ENCODE measurements at regions of chr11 and their contacts with region 1.

Region 1: GRCh38 chr11:64358907-64359711 is at the start of gene RPS6KA4:
- DNase-seq: no peak
- H3K4me3 ChIP-seq: peak within 1 kb of the TSS; percentile 94
- CTCF ChIP-seq: no peak

Region 2: DNA sequence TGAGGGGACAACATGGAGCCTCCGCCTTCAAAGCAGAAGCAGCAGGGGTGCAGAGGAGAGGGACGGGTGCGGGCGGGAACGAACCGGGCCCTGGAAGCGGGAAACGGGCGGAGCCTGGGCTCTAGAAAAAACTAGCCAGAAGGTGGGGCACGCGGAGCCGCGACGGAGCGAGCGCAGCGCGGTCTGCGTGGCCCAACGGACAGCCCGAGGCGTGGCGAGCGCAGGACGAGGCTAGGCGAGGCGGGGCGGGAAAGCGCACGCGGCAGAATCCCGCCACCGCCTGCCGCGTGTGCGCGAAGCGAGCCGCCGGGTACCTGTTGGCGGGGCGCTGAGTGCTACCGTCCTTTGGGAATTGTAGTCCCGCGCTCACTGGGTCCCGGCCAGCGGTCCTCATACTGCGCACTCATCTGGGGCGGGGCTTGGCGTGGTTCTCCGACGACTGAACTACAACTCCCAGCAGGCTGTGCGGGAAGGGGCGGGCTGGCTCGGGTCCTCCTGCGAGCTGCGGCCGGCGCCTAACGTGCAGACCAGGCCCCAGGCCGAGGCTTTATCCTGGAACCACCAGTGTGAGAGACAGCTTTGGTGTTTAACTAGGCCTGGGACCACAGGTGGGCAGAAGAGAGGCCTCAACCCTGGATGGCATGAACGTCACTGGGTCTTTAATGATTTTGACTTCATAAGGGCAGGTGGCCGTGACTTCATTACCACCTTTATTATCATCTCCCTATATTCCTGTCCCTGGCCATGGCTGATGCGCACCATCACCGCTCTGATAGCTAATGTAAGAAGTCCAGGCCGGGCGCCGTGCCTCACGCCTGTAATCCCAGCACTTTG is 687.6 kb before region 1 on chr11 and contains the start of gene ATL3:
- CTCF ChIA-PET with region 1: no interaction called
- POLR2A ChIA-PET with region 1: no interaction called
- DNase-seq: peak; percentile 53
- H3K4me3 ChIP-seq: peak within 1 kb of the TSS; percentile 79
- CTCF ChIP-seq: peak; percentile 10

Region 3: DNA sequence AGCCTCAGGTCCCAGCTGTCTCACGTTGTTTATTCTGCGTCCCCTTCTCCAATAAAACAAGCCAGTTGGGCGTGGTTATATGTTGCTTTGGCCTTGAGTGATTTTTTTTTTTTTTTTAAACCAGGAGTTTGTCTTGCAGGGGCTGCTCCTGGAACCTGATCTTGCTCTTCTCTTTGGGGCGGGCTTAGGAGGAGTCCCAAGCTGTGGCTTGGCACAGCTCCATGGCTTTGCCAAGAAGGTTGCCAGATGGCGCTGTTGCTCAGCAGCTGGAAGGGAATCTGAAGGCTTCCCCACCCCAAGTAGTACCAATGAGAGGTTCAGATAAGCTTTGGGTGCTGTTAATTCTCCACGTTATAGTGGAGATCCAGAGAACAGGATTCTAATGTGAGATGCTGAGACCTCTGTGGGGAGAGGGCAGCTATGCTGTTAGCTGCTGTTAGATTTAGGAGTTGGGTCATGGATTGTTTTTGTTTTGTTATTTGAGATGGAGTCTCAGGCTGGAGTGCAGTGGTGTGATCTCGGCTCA is 154.6 kb before region 1 on chr11:
- CTCF ChIA-PET with region 1: interaction called, 47 read pairs
- POLR2A ChIA-PET with region 1: no interaction called
- DNase-seq: peak; percentile 74
- H3K4me3 ChIP-seq: no peak overlapping the region
- CTCF ChIP-seq: peak; percentile 83

Region 4: GRCh38 chr11:64269380-64270234 is 89.5 kb before region 1 on chr11:
- CTCF ChIA-PET with region 1: interaction called, 17 read pairs
- POLR2A ChIA-PET with region 1: interaction called, 8 read pairs
- DNase-seq: peak; percentile 99
- H3K4me3 ChIP-seq: peak overlapping the region; percentile 69
- CTCF ChIP-seq: no peak

Region 5: GRCh38 chr11:64284048-64284961 is 74.8 kb before region 1 on chr11 and contains the start of gene BAD:
- CTCF ChIA-PET with region 1: interaction called, 26 read pairs
- POLR2A ChIA-PET with region 1: no interaction called
- DNase-seq: no peak
- H3K4me3 ChIP-seq: peak within 1 kb of the TSS; percentile 73
- CTCF ChIP-seq: no peak

Region 6: GRCh38 chr11:64317957-64318693 is 41.0 kb before region 1 on chr11 and contains the start of gene PRDX5:
- CTCF ChIA-PET with region 1: interaction called, 48 read pairs
- POLR2A ChIA-PET with region 1: interaction called, 7 read pairs
- DNase-seq: peak; percentile 59
- H3K4me3 ChIP-seq: peak within 1 kb of the TSS; percentile 96
- CTCF ChIP-seq: peak; percentile 50

Region 7: DNA sequence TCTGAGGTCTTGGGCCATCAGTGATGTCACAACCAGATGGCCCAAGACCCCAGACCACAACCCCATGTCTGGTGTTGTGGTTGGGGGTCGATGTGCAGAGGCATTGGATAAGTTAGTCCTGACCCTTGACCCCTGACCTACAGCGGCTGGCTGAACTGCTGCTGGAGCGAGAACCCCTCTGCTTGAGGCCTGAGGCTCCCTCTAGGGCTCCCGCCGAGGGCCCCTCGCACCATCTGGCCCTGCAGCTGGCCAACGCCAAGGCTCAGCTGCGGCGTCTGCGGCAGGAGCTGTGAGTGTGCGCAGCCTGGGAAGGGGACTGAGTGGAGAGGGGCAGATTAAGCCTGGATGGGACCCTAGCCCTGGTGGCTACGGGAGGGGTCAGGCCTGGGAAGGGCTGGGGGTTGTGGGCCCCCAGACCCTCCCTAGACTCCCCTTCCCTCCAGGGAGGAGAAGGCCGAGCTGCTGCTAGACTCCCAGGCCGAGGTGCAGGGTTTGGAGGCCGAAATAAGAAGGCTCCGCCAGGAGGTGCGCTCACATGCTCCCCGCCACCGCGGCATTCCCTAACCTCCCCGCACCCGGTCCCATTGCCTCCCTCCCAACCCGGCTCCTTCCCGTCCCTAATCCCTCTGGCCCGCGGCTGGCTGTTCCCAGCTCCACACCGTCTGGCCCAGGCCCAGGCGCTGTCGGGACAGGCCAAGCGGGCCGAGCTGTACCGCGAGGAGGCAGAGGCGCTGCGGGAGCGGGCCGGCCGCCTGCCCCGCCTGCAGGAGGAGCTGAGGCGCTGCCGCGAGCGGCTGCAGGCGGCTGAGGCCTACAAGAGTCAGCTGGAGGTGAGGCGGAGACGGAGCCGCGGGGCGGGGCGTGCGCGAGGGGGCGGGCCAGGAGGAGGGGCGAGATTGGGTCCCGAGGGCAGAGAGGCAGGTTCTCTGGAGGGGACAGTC is 17.0 kb before region 1 on chr11:
- CTCF ChIA-PET with region 1: interaction called, 414 read pairs
- POLR2A ChIA-PET with region 1: interaction called, 10 read pairs
- DNase-seq: peak; percentile 28
- H3K4me3 ChIP-seq: peak overlapping the region; percentile 55
- CTCF ChIP-seq: peak; percentile 67

Region 8: GRCh38 chr11:64376066-64376465 is 17.0 kb after region 1 on chr11:
- CTCF ChIA-PET with region 1: interaction called, 13 read pairs
- POLR2A ChIA-PET with region 1: no interaction called
- DNase-seq: no peak
- H3K4me3 ChIP-seq: no peak overlapping the region
- CTCF ChIP-seq: no peak

Region 9: DNA sequence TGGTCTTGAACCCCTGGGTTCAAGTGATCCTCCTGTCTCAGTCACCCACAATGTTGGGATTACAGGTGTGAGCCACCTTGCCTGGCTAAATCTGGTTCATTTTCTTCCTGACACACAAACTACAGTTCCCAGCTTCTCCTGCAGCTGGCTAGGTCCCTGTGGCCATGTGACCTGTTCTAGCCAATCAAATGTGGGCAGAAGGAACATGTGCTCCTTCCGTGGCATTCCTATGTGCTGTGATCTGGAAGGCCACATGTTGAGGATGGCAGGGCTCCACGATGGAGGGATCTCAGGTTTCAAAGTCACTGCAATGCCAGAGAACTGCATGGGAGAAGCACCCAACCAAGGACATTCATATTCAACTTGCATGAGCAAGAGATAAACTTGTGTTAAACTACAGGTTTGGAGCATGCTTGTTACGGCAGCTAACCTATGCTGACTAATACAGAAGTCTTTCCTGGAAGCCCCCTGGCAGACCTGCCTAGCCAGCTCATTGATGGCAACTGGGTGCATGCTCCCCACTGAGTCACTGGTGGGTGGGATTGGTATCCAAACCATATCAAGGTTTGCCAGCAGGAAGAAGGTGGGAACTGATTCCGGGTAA is 85.8 kb after region 1 on chr11:
- CTCF ChIA-PET with region 1: no interaction called
- POLR2A ChIA-PET with region 1: no interaction called
- DNase-seq: no peak
- H3K4me3 ChIP-seq: no peak overlapping the region
- CTCF ChIP-seq: no peak

Region 10: DNA sequence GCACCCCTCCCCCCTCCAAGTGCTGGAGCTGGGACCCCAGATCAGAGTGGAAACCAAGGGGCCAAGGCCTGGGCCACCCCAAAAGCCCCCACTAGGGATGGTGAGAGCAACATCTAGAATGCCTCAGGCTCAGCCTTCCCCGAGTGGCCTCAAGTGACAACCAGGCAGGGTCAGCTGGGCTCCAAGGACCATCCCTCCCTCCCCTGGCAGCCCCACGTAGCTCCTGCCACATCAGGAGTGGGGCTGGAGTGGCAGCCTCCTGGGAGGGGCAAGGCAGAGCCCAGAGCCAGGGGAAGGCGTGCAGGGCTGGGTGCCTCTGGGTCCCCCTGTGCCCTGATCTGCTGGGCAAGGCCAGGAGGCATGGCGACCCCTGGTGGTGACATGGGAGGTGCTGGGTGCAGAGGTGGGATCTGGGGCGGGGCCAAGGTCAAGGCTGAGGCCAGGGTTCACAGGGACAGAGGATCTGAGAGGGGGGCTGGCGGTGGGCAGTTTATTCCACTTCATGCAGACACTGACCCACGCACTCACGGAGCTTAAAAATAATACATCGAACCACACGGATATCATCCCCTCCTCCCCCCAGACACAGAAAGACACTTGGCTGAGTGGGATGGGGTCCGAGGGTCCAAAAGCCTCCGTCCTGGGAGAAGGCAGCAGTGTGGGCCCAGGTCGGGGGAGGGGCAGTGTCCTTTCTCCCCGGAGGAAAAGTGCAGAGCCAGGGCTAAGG is 535.1 kb after region 1 on chr11:
- CTCF ChIA-PET with region 1: no interaction called
- POLR2A ChIA-PET with region 1: no interaction called
- DNase-seq: no peak
- H3K4me3 ChIP-seq: no peak overlapping the region
- CTCF ChIP-seq: peak; percentile 96

Measured in AG04449 (cell line).